T-cell (primary cell): ENCODE measurements at regions of chr11 and their contacts with region 1.

Region 1: GRCh38 chr11:35144136-35144741 is 5.3 kb downstream of the CD44 start:
- DNase-seq: peak in 34 of 35 experiments; percentile 43 to 83 (median 65)
- ATAC-seq: peak; percentile 62 to 74 (median 64)
- H3K4me3 ChIP-seq: peak overlapping the region; percentile 61 to 85
- H3K4me3 Mint-ChIP-seq: peak overlapping the region; percentile 91 to 98 (median 98)
- H3K27ac ChIP-seq: peak overlapping the region; percentile 91
- H3K27ac Mint-ChIP-seq: peak overlapping the region; percentile 92 to 98
- H3K4me1 ChIP-seq: peaks cover 60 to 79% of the 10 kb centered on the region in 2 experiments
- H3K4me1 Mint-ChIP-seq: peaks cover 75 to 92% (median 79%) of the 10 kb centered on the region in 3 donors
- H3K27me3 ChIP-seq: no peaks in the 10 kb centered on the region
- H3K27me3 Mint-ChIP-seq: no peaks in the 10 kb centered on the region

Region 2: GRCh38 chr11:35003186-35003585 is 141.1 kb before region 1 on chr11:
- CTCF ChIA-PET with region 1: interaction called in 1 of 2 experiments, 5 read pairs
- POLR2A ChIA-PET with region 1: interaction called in 1 of 2 experiments, 10 read pairs
- DNase-seq: no peak
- ATAC-seq: no peak
- H3K4me3 ChIP-seq: no peak overlapping the region
- H3K4me3 Mint-ChIP-seq: no peak overlapping the region
- H3K27ac ChIP-seq: no peak overlapping the region
- H3K27ac Mint-ChIP-seq: no peak overlapping the region
- H3K4me1 ChIP-seq: peaks cover 7 to 15% of the 10 kb centered on the region in 2 experiments
- H3K4me1 Mint-ChIP-seq: peaks cover 28 to 66% (median 53%) of the 10 kb centered on the region in 3 donors
- H3K27me3 ChIP-seq: no peaks in the 10 kb centered on the region
- H3K27me3 Mint-ChIP-seq: no peaks in the 10 kb centered on the region

Region 3: GRCh38 chr11:35087648-35088047 is 56.6 kb before region 1 on chr11:
- CTCF ChIA-PET with region 1: no interaction called
- POLR2A ChIA-PET with region 1: interaction called in 1 of 2 experiments, 10 read pairs
- DNase-seq: no peak
- ATAC-seq: no peak
- H3K4me3 ChIP-seq: no peak overlapping the region
- H3K4me3 Mint-ChIP-seq: no peak overlapping the region
- H3K27ac ChIP-seq: no peak overlapping the region
- H3K27ac Mint-ChIP-seq: peak overlapping the region; percentile 27 to 58
- H3K4me1 ChIP-seq: peaks cover 44 to 52% of the 10 kb centered on the region in 2 experiments
- H3K4me1 Mint-ChIP-seq: peaks cover 75 to 86% (median 80%) of the 10 kb centered on the region in 3 donors
- H3K27me3 ChIP-seq: no peaks in the 10 kb centered on the region
- H3K27me3 Mint-ChIP-seq: no peaks in the 10 kb centered on the region

Region 4: DNA sequence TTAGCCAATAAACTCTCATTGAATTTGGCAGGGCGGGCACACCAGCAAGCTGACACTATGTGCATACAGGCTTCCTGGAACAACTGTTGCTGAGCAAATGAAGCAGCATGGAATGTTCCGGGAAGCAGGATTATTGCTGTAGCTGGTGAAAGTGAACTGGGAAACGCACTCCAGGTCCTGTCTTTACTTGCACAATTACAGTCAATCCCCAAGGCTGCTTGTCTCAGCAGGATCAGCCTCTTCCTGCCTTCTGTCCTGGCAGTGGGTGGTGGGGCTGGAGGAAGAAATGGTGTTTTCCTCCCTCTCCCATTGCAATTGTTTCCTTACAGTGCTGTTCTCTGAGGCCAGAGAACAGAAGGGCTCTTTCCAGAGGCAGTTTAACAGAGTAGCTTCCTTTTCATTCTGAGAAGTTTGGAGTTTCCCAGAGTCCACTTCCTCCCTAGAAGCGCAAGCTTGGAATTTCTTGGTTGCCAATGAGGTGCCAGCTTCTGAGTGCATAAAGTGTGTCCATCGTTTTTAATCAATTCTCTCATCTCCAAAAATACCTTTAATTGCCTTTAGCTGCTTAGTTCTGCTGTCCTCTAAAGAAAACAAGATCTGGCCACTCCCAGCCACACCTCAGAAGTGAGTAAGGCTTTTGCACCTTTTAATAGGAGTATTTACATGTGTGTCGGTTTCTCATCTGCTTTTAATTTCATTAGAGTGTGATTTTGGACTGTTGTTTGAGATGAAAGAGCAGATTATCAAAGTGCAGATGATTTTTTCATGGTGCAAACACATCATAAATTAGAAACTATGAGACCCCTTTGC is 14.7 kb after region 1 on chr11:
- CTCF ChIA-PET with region 1: interaction called, 9 to 11 read pairs
- POLR2A ChIA-PET with region 1: interaction called, 7 to 165 read pairs
- DNase-seq: no peak
- ATAC-seq: no peak
- H3K4me3 ChIP-seq: no peak overlapping the region
- H3K4me3 Mint-ChIP-seq: peak overlapping the region; percentile 29 to 69 (median 61)
- H3K27ac ChIP-seq: peak overlapping the region; percentile 99
- H3K27ac Mint-ChIP-seq: peak overlapping the region; percentile 100
- H3K4me1 ChIP-seq: peaks cover 87 to 98% of the 10 kb centered on the region in 2 experiments
- H3K4me1 Mint-ChIP-seq: peaks cover 100% of the 10 kb centered on the region in 3 donors
- H3K27me3 ChIP-seq: no peaks in the 10 kb centered on the region
- H3K27me3 Mint-ChIP-seq: no peaks in the 10 kb centered on the region

Region 5: DNA sequence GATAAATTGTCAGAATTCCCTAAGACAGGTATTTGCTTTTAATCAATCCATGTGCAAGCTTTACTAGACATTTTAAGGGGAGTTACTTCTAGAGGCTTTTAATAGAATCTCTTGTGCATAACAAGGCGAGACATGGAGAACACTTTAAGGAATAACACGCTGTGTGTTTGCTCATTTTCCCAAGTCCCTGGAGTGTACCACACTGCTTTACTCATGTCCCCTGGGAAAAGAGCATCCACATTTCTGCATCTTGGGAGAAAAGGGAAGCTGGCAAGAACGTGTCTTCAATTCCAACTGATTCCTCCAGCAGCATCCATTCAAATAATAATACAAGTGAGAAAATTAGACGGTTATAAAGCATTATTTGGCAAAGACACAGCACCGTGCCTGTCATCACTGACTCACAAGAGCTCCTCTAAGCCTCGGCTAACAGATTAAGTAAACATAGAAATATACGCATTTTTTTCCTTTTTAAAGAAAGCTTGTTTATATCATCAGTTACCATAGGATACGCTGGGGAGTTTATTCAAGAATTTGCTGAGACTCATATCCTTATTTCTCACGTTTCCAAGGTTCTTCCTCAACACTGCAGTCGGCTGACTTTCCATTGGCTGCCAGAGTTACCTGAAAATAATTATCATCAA is 116.2 kb after region 1 on chr11:
- CTCF ChIA-PET with region 1: no interaction called
- POLR2A ChIA-PET with region 1: no interaction called
- DNase-seq: no peak
- ATAC-seq: no peak
- H3K4me3 ChIP-seq: no peak overlapping the region
- H3K4me3 Mint-ChIP-seq: no peak overlapping the region
- H3K27ac ChIP-seq: no peak overlapping the region
- H3K27ac Mint-ChIP-seq: no peak overlapping the region
- H3K4me1 ChIP-seq: peaks cover 10 to 14% of the 10 kb centered on the region in 2 experiments
- H3K4me1 Mint-ChIP-seq: peaks cover 23 to 28% (median 26%) of the 10 kb centered on the region in 3 donors
- H3K27me3 ChIP-seq: no peaks in the 10 kb centered on the region
- H3K27me3 Mint-ChIP-seq: no peaks in the 10 kb centered on the region